Motor neuron (in vitro differentiated cells): ENCODE measurements at regions of chr1 and their contacts with region 1.

Region 1: GRCh38 chr1:204128964-204129896 is 22.6 kb downstream of the ETNK2 start:
- ATAC-seq: peak; percentile 57 to 89 (median 80)
- H3K4me3 ChIP-seq: no peak overlapping the region
- H3K27ac ChIP-seq: peak overlapping the region in 1 of 2 donors; percentile 5
- H3K4me1 ChIP-seq: peaks cover 48 to 51% of the 10 kb centered on the region in 2 donors

Region 2: GRCh38 chr1:203861379-203862184 is 267.6 kb before region 1 on chr1 and contains the start of gene SNRPE:
- in situ Hi-C with region 1: loop called in 4 of 9 experiments (anchors 10 kb)
- ATAC-seq: peak; percentile 89 to 99 (median 96)
- H3K4me3 ChIP-seq: peak within 1 kb of the TSS; percentile 72 to 84 (median 78)
- H3K27ac ChIP-seq: peak within 1 kb of the TSS; percentile 72 to 85
- H3K4me1 ChIP-seq: peaks cover 6 to 10% of the 10 kb centered on the region in 2 donors
- total RNA-seq, gene SNRPE: 104 to 392 (median 191) TPM

Region 3: GRCh38 chr1:203871107-203871875 is 257.9 kb before region 1 on chr1:
- in situ Hi-C with region 1: loop called (anchors 5 to 10 kb)
- ATAC-seq: peak; percentile 76 to 93 (median 87)
- H3K4me3 ChIP-seq: no peak overlapping the region
- H3K27ac ChIP-seq: no peak overlapping the region
- H3K4me1 ChIP-seq: peaks cover 6% of the 10 kb centered on the region in 2 donors

Region 4: GRCh38 chr1:204072931-204073836 is 56.0 kb before region 1 on chr1 and contains the start of gene SOX13:
- in situ Hi-C with region 1: loop called in 1 of 9 experiments (anchors 10 kb)
- ATAC-seq: peak; percentile 78 to 84 (median 80)
- H3K4me3 ChIP-seq: peak within 1 kb of the TSS; percentile 48 to 100 (median 93)
- H3K27ac ChIP-seq: peak within 1 kb of the TSS; percentile 78 to 89
- H3K4me1 ChIP-seq: peaks cover 25 to 29% of the 10 kb centered on the region in 2 donors
- total RNA-seq, gene SOX13: 4.7 to 72.2 (median 18.0) TPM